Colonic mucosa (tissue), 4 donors: ENCODE measurements at regions of chr3 and their contacts with region 1.

Region 1: GRCh38 chr3:136305878-136306277 is 55.7 kb downstream of the PCCB start:
- DNase-seq: no peak
- H3K4me3 ChIP-seq: no peak overlapping the region
- H3K27ac ChIP-seq: no peak overlapping the region
- H3K4me1 ChIP-seq: no peaks in the 10 kb centered on the region
- H3K27me3 ChIP-seq: no peaks in the 10 kb centered on the region
- CTCF ChIP-seq: peak; percentile 33

Region 2: GRCh38 chr3:134536781-134537180 is 1769.1 kb before region 1 on chr3:
- intact Hi-C with region 1: loop called (anchors 10 kb)
- DNase-seq: no peak
- H3K4me3 ChIP-seq: no peak overlapping the region
- H3K27ac ChIP-seq: no peak overlapping the region
- H3K4me1 ChIP-seq: no peaks in the 10 kb centered on the region
- H3K27me3 ChIP-seq: no peaks in the 10 kb centered on the region
- CTCF ChIP-seq: no peak

Region 3: DNA sequence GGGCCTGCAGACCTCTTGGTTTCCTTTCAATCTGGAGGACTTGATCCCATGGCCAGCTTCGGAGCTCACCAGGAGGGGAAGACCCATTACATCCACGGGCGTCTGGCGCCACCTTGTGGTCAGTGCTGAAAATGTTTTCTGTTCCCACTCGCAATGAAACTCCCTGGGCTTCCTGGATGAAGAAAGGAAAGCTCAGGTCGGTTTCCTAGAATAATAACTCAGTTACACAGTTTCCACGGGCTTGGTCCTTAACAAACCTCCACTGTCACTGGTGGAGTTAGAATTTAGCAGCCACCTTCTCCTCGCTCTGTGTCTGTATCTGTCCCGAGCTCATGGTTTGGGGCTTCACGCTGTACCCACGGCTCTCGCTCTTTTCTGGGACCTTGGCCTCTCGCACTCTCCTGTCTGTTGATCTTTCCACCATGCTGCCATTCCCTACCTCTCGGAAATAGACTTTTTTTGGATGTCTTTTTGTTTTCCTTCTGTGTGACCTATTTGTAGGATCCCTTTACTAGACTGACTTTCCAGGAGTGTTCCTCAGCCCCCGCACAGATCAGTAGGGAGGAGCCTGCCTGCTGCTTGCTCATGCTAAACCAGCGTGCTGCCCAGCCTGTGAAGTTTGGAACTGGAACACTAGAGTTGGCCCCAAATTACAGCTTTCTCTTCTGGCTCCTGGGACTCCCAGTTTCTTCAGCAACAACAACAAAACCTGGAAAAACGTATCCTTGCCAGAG is 708.2 kb after region 1 on chr3:
- intact Hi-C with region 1: loop called (anchors 10 kb)
- DNase-seq: peak; percentile 95
- H3K4me3 ChIP-seq: peak overlapping the region; percentile 42
- H3K27ac ChIP-seq: no peak overlapping the region
- H3K4me1 ChIP-seq: peaks cover 5% of the 10 kb centered on the region
- H3K27me3 ChIP-seq: no peaks in the 10 kb centered on the region
- CTCF ChIP-seq: peak; percentile 87